ENCODE measurements at regions of chr9 and their contacts with region 1.

Region 1: DNA sequence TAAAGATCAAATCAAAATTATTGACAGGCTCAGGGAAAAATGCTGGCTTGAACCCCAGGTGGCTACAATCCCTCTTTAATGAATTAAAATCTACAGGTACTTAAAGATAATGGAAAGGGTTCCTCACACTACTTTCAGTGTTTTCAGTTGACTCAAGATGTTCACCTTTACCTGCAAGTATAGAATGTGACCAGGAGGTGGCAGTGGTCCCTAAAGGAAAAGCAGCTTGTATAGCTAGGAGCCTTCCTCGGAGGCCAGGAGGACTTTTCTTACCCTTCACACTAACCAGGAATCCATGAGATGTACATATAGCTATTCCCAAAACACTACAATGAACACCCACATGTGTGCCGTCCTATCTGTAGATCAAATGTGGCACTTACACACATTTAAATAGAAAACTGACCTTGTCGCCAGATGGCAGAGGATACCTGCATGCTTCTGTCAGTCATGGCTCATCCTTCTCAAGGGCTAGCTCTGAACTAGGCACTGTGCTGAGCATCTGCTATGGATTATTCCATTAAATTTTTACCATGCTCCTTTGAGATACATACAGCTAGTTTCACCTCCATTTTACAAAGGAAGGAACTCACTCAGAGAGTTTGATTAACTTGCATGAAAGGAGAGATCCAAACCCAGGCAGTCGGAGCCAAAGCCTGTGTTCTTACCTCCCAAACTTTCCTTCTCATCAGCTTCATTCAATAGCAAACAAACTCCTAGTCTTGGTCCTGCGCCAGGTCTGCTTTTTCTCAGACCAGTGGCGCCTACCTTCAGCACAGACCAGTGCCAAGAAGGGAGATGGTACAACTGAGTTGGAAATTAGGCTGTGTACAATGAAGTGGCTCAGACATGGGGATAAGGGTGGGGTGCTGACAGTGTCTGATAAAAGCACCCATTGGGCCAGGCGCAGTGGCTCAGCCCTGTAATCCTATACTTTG is 24.5 kb downstream of the C9orf152 start:
- DNase-seq: peak; percentile 46 to 76
- H3K4me3 ChIP-seq: no peak overlapping the region
- H3K4me1 ChIP-seq: no peaks in the 10 kb centered on the region
- H3K27me3 ChIP-seq: no peaks in the 10 kb centered on the region

Region 2: GRCh38 chr9:110579034-110579861 is 395.8 kb after region 1 on chr9 and contains the start of gene SVEP1:
- in situ Hi-C with region 1: loop called (anchors 25 kb)
- DNase-seq: peak in 1 of 2 experiments; percentile 7
- H3K4me3 ChIP-seq: no peak within 1 kb of the TSS
- H3K4me1 ChIP-seq: no peaks in the 10 kb centered on the region
- H3K27me3 ChIP-seq: peaks cover 42% of the 10 kb centered on the region